CD4-positive, alpha-beta T cell (primary cell): ENCODE measurements at regions of chr17 and their contacts with region 1.

Region 1: GRCh38 chr17:80147035-80147836 is at the start of gene EIF4A3:
- DNase-seq: peak; percentile 91 to 100 (median 95)
- ATAC-seq: peak; percentile 90
- H3K4me3 ChIP-seq: peak within 1 kb of the TSS; percentile 95
- H3K4me3 Mint-ChIP-seq: peak within 1 kb of the TSS; percentile 99
- H3K27ac ChIP-seq: peak within 1 kb of the TSS; percentile 84 to 93
- H3K27ac Mint-ChIP-seq: peak within 1 kb of the TSS; percentile 95
- H3K4me1 ChIP-seq: peaks cover 45% of the 10 kb centered on the region
- H3K4me1 Mint-ChIP-seq: peaks cover 49% of the 10 kb centered on the region
- H3K27me3 ChIP-seq: no peaks in the 10 kb centered on the region
- H3K27me3 Mint-ChIP-seq: no peaks in the 10 kb centered on the region
- CTCF ChIP-seq: no peak
- total RNA-seq, gene EIF4A3: 79.6 to 79.7 TPM

Region 2: GRCh38 chr17:79272666-79273219 is 874.5 kb before region 1 on chr17:
- CTCF ChIA-PET with region 1: no interaction called
- POLR2A ChIA-PET with region 1: no interaction called
- intact Hi-C with region 1: no loop called
- DNase-seq: no peak
- ATAC-seq: no peak
- H3K4me3 ChIP-seq: no peak overlapping the region
- H3K4me3 Mint-ChIP-seq: no peak overlapping the region
- H3K27ac ChIP-seq: no peak overlapping the region
- H3K27ac Mint-ChIP-seq: no peak overlapping the region
- H3K4me1 ChIP-seq: no peaks in the 10 kb centered on the region
- H3K4me1 Mint-ChIP-seq: no peaks in the 10 kb centered on the region
- H3K27me3 ChIP-seq: peaks cover 11 to 15% of the 10 kb centered on the region in 2 experiments
- H3K27me3 Mint-ChIP-seq: peaks cover 40% of the 10 kb centered on the region
- CTCF ChIP-seq: no peak

Region 3: GRCh38 chr17:79974566-79975497 is 172.4 kb before region 1 on chr17:
- CTCF ChIA-PET with region 1: no interaction called
- POLR2A ChIA-PET with region 1: no interaction called
- intact Hi-C with region 1: no loop called
- DNase-seq: no peak
- ATAC-seq: no peak
- H3K4me3 ChIP-seq: no peak overlapping the region
- H3K4me3 Mint-ChIP-seq: no peak overlapping the region
- H3K27ac ChIP-seq: no peak overlapping the region
- H3K27ac Mint-ChIP-seq: no peak overlapping the region
- H3K4me1 ChIP-seq: peaks cover 4% of the 10 kb centered on the region
- H3K4me1 Mint-ChIP-seq: no peaks in the 10 kb centered on the region
- H3K27me3 ChIP-seq: no peaks in the 10 kb centered on the region
- H3K27me3 Mint-ChIP-seq: no peaks in the 10 kb centered on the region
- CTCF ChIP-seq: no peak

Region 4: GRCh38 chr17:80219013-80219762 is 72.0 kb after region 1 on chr17:
- CTCF ChIA-PET with region 1: no interaction called
- POLR2A ChIA-PET with region 1: interaction called, 3 read pairs
- intact Hi-C with region 1: loop called in 1 of 2 experiments (anchors 5 kb)
- DNase-seq: peak; percentile 86 to 97 (median 93)
- ATAC-seq: peak; percentile 90
- H3K4me3 ChIP-seq: peak overlapping the region; percentile 99
- H3K4me3 Mint-ChIP-seq: peak overlapping the region; percentile 95
- H3K27ac ChIP-seq: peak overlapping the region; percentile 89 to 93
- H3K27ac Mint-ChIP-seq: peak overlapping the region; percentile 93
- H3K4me1 ChIP-seq: peaks cover 45% of the 10 kb centered on the region
- H3K4me1 Mint-ChIP-seq: peaks cover 43% of the 10 kb centered on the region
- H3K27me3 ChIP-seq: no peaks in the 10 kb centered on the region
- H3K27me3 Mint-ChIP-seq: no peaks in the 10 kb centered on the region
- CTCF ChIP-seq: no peak

Region 5: GRCh38 chr17:80232438-80232837 is 85.2 kb after region 1 on chr17:
- CTCF ChIA-PET with region 1: no interaction called
- POLR2A ChIA-PET with region 1: no interaction called
- intact Hi-C with region 1: no loop called
- DNase-seq: no peak
- ATAC-seq: no peak
- H3K4me3 ChIP-seq: no peak overlapping the region
- H3K4me3 Mint-ChIP-seq: no peak overlapping the region
- H3K27ac ChIP-seq: no peak overlapping the region
- H3K27ac Mint-ChIP-seq: no peak overlapping the region
- H3K4me1 ChIP-seq: no peaks in the 10 kb centered on the region
- H3K4me1 Mint-ChIP-seq: no peaks in the 10 kb centered on the region
- H3K27me3 ChIP-seq: no peaks in the 10 kb centered on the region
- H3K27me3 Mint-ChIP-seq: no peaks in the 10 kb centered on the region
- CTCF ChIP-seq: no peak

Region 6: DNA sequence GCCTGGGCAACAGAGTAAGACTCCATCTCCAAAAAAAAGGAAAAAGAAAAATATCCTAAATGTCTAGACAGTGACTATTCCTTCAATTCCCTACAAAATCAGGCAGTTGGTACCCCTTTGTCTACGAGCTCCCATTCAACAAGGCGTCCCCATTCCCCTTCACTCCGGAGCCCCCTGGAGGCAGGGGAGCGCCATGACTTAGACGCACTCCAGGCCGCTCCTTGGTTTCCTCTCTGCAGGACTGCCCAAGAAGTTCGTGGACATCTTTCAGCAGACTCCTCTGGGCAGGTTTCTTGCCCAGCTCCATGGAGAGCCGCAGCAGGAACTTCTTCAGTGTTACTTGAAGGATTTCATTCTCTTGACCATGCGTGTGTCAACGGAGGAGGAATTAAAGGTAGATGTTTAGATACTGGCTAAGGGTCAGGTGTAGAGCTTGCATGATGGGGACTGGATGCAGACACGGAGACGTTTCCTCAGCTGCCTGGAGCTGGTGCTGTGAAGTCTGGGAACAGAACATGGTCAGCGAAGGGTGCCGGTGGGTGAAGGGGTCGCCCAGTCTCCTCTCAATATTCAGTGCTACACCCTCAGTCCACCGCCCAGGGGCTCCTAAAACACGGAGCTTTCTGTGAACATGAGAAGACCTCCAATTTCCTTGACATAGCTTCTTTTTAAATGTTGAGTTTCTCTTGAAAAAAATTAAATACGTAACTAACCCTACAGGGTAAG is 214.4 kb after region 1 on chr17:
- CTCF ChIA-PET with region 1: no interaction called
- POLR2A ChIA-PET with region 1: no interaction called
- intact Hi-C with region 1: no loop called
- DNase-seq: peak in 5 of 14 experiments; percentile 13 to 31 (median 16)
- ATAC-seq: peak; percentile 55
- H3K4me3 ChIP-seq: no peak overlapping the region
- H3K4me3 Mint-ChIP-seq: no peak overlapping the region
- H3K27ac ChIP-seq: no peak overlapping the region
- H3K27ac Mint-ChIP-seq: no peak overlapping the region
- H3K4me1 ChIP-seq: no peaks in the 10 kb centered on the region
- H3K4me1 Mint-ChIP-seq: no peaks in the 10 kb centered on the region
- H3K27me3 ChIP-seq: no peaks in the 10 kb centered on the region
- H3K27me3 Mint-ChIP-seq: no peaks in the 10 kb centered on the region
- CTCF ChIP-seq: peak; percentile 16